Ovary (tissue), 10 donors: ENCODE measurements at regions of chr2 and their contacts with region 1.

Region 1: GRCh38 chr2:6423157-6423556 is 442.6 kb downstream of the CMPK2 start:
- DNase-seq: no peak
- H3K4me3 ChIP-seq: no peak overlapping the region
- H3K27ac ChIP-seq: no peak overlapping the region
- H3K4me1 ChIP-seq: no peaks in the 10 kb centered on the region
- H3K27me3 ChIP-seq: no peaks in the 10 kb centered on the region
- CTCF ChIP-seq: no peak
- EP300 ChIP-seq: no peak
- POLR2A ChIP-seq: no peak

Region 2: GRCh38 chr2:6368281-6368680 is 54.9 kb before region 1 on chr2:
- intact Hi-C with region 1: loop called in 1 of 4 experiments (anchors 1 kb)
- DNase-seq: no peak
- H3K4me3 ChIP-seq: no peak overlapping the region
- H3K27ac ChIP-seq: no peak overlapping the region
- H3K4me1 ChIP-seq: no peaks in the 10 kb centered on the region
- H3K27me3 ChIP-seq: no peaks in the 10 kb centered on the region
- CTCF ChIP-seq: no peak
- EP300 ChIP-seq: no peak
- POLR2A ChIP-seq: no peak

Region 3: GRCh38 chr2:6674381-6674780 is 251.2 kb after region 1 on chr2:
- intact Hi-C with region 1: no loop called
- DNase-seq: no peak
- H3K4me3 ChIP-seq: no peak overlapping the region
- H3K27ac ChIP-seq: no peak overlapping the region
- H3K4me1 ChIP-seq: no peaks in the 10 kb centered on the region
- H3K27me3 ChIP-seq: no peaks in the 10 kb centered on the region
- CTCF ChIP-seq: no peak
- EP300 ChIP-seq: no peak
- POLR2A ChIP-seq: no peak